ENCODE measurements at regions of chr9 and their contacts with region 1.

Region 1: DNA sequence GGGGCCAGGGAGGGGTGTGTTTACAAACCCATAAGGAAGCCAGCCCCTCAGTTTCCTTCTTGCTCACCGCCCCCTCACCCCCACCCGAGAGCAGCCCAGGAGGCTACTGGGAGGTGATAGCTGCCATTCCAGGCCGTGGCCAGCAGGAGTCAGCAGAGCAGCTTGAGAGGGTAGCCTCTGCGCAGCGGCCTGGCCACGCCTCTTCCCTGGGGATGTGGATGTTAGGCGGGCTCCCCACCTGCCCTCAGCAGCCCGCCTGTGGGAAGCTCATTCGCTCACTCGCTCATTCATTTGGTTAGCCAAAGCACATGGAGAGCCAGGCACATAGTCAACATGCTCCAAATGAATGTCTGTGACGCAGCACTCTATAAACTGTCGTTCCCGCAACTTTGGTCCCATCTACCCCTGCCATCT is 6.1 kb upstream of the DPM2 start:
- DNase-seq: peak; percentile 94
- H3K4me3 ChIP-seq: no peak overlapping the region
- H3K27ac ChIP-seq: peak overlapping the region in 2 of 4 donors; percentile 38 to 54
- H3K4me1 ChIP-seq: peaks cover 31 to 55% (median 52%) of the 10 kb centered on the region in 4 donors
- H3K27me3 ChIP-seq: no peaks in the 10 kb centered on the region
- CTCF ChIP-seq: peak; percentile 92 to 98 (median 96)
- EP300 ChIP-seq: no peak
- POLR2A ChIP-seq: no peak

Region 2: GRCh38 chr9:127751269-127752054 is 192.3 kb before region 1 on chr9:
- intact Hi-C with region 1: no loop called
- DNase-seq: no peak
- H3K4me3 ChIP-seq: no peak overlapping the region
- H3K27ac ChIP-seq: no peak overlapping the region
- H3K4me1 ChIP-seq: peaks cover 14 to 18% (median 17%) of the 10 kb centered on the region in 4 donors
- H3K27me3 ChIP-seq: peaks cover 0 to 76% (median 21%) of the 10 kb centered on the region in 4 donors
- CTCF ChIP-seq: no peak
- EP300 ChIP-seq: no peak
- POLR2A ChIP-seq: no peak

Region 3: DNA sequence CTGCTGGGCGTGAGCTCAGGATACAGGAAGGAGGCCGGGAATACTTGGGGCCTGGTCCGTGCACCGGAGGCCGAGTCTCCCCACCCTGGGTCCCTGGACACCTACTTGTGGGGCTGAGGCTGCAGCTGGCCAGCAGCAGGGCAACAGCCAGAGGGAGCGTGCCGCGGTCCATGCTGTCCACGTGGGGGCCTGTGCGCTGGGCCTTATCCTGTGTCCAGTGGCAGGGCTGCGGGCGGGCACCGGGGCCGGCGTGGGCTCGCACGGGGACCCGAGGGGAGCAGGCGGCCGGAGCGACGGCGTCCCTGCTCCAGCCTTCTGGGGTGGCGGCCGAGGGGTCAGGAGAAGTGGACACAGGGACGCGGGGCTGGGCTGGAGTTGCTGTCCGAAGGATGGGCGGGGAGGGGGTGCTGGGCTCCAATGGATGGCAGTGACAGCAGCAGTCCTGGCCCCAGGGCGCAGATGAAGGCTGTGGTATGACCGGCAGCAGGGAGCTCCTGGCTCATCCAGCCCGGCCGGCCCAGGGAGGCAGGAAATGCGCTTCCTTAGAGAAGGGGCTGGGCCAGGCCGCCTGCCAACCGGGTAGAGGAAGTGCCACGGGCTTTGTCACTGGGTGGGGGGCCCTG is 89.4 kb before region 1 on chr9 and contains the start of gene ENG:
- intact Hi-C with region 1: no loop called
- DNase-seq: no peak
- H3K4me3 ChIP-seq: peak within 1 kb of the TSS; percentile 58 to 75 (median 67)
- H3K27ac ChIP-seq: peak within 1 kb of the TSS; percentile 68 to 86 (median 83)
- H3K4me1 ChIP-seq: peaks cover 46 to 65% (median 64%) of the 10 kb centered on the region in 4 donors
- H3K27me3 ChIP-seq: peaks cover 0 to 8% (median 0%) of the 10 kb centered on the region in 4 donors
- CTCF ChIP-seq: peak in 1 of 3 experiments; percentile 9
- EP300 ChIP-seq: no peak
- POLR2A ChIP-seq: no peak
- total RNA-seq, gene ENG: 36.5 to 91.2 (median 78.3) TPM

Region 4: GRCh38 chr9:127877566-127877998 is 66.2 kb before region 1 on chr9 and contains the start of gene AK1:
- intact Hi-C with region 1: no loop called
- DNase-seq: no peak
- H3K4me3 ChIP-seq: peak within 1 kb of the TSS; percentile 67 to 91 (median 76)
- H3K27ac ChIP-seq: peak within 1 kb of the TSS; percentile 80 to 91 (median 86)
- H3K4me1 ChIP-seq: peaks cover 46 to 62% (median 56%) of the 10 kb centered on the region in 4 donors
- H3K27me3 ChIP-seq: no peaks in the 10 kb centered on the region
- CTCF ChIP-seq: no peak
- EP300 ChIP-seq: no peak
- POLR2A ChIP-seq: no peak
- total RNA-seq, gene AK1: 37.4 to 75.0 (median 56.0) TPM

Region 5: DNA sequence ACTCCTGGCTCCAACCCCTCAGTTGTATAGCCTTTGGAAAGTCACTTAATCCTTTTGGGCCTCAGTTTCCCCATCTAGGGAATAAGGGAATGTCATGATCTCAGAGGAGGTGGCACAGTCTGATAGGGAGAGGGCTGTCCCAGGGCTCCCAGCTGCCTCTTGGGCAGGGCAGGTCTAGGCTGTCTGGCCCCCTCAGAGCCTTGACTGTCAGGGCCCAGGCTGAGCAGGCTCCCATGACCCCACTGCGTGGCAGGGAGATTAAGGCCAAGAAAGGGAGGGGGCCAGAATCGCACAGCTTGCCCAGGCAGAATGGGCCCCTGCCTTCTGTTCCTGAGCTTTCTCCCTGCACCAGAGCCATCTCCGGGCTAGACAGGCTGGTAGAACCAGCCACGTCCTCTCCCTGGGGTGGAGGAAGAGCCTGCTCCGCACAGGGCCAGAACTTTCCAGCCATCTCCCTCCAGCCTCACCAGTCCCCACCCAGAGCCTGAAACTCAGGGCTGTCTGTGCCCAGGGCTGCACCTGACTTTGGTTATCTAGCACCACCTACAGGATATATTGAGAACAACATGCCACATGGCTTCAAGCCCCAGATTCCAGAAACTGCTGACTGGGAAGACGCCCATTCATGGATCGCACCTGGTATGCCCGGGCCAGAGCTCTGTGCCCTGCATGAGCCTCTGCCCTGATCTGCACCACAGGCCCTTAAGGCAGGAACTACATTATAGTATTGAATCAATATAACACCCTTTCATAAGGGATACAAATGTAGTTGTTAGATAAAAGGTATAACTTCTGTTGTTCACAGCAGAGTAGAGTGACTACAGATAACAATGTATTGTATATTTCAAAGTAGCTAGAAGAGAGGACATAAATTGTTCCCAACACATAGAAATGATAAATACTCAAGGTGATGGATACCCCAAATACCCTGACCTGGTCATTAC is 91.4 kb after region 1 on chr9:
- intact Hi-C with region 1: loop called (anchors 1 kb)
- DNase-seq: peak; percentile 93
- H3K4me3 ChIP-seq: no peak overlapping the region
- H3K27ac ChIP-seq: no peak overlapping the region
- H3K4me1 ChIP-seq: peaks cover 3 to 9% (median 5%) of the 10 kb centered on the region in 4 donors
- H3K27me3 ChIP-seq: no peaks in the 10 kb centered on the region
- CTCF ChIP-seq: peak; percentile 87 to 96 (median 93)
- EP300 ChIP-seq: no peak
- POLR2A ChIP-seq: no peak

Region 6: GRCh38 chr9:128081056-128081455 is 137.3 kb after region 1 on chr9:
- intact Hi-C with region 1: no loop called
- DNase-seq: no peak
- H3K4me3 ChIP-seq: no peak overlapping the region
- H3K27ac ChIP-seq: peak overlapping the region; percentile 68 to 77 (median 75)
- H3K4me1 ChIP-seq: peaks cover 36 to 67% (median 59%) of the 10 kb centered on the region in 4 donors
- H3K27me3 ChIP-seq: no peaks in the 10 kb centered on the region
- CTCF ChIP-seq: no peak
- EP300 ChIP-seq: no peak
- POLR2A ChIP-seq: no peak

Region 7: GRCh38 chr9:128117613-128118471 is 174.1 kb after region 1 on chr9:
- intact Hi-C with region 1: loop called (anchors 2 kb)
- DNase-seq: peak; percentile 97
- H3K4me3 ChIP-seq: no peak overlapping the region
- H3K27ac ChIP-seq: peak overlapping the region in 1 of 4 donors; percentile 19
- H3K4me1 ChIP-seq: peaks cover 5 to 16% (median 9%) of the 10 kb centered on the region in 4 donors
- H3K27me3 ChIP-seq: no peaks in the 10 kb centered on the region
- CTCF ChIP-seq: peak; percentile 99 to 100 (median 100)
- EP300 ChIP-seq: no peak
- POLR2A ChIP-seq: no peak